OCI-LY7 (cell line): ENCODE measurements at regions of chr11 and their contacts with region 1.

Region 1: GRCh38 chr11:27506200-27507182 is at the start of gene LIN7C:
- DNase-seq: peak; percentile 97
- H3K4me3 ChIP-seq: peak within 1 kb of the TSS; percentile 97
- H3K27ac ChIP-seq: peak within 1 kb of the TSS; percentile 78
- H3K4me1 ChIP-seq: peaks cover 21% of the 10 kb centered on the region
- CTCF ChIP-seq: peak; percentile 39
- total RNA-seq, gene LIN7C: 19.7 and 22.7 TPM in 2 replicates

Region 2: GRCh38 chr11:26134481-26135355 is 1371.8 kb before region 1 on chr11:
- CTCF ChIA-PET with region 1: no interaction called
- POLR2A ChIA-PET with region 1: no interaction called
- intact Hi-C with region 1: loop called (anchors 10 kb)
- DNase-seq: peak; percentile 72
- H3K4me3 ChIP-seq: no peak overlapping the region
- H3K27ac ChIP-seq: peak overlapping the region; percentile 10
- H3K4me1 ChIP-seq: peaks cover 19% of the 10 kb centered on the region
- CTCF ChIP-seq: peak; percentile 87

Region 3: GRCh38 chr11:27362749-27363575 is 143.5 kb before region 1 on chr11 and contains the start of gene CCDC34:
- CTCF ChIA-PET with region 1: no interaction called
- POLR2A ChIA-PET with region 1: no interaction called
- intact Hi-C with region 1: loop called (anchors 2 kb)
- DNase-seq: peak; percentile 97
- H3K4me3 ChIP-seq: peak within 1 kb of the TSS; percentile 80
- H3K27ac ChIP-seq: peak within 1 kb of the TSS; percentile 50
- H3K4me1 ChIP-seq: peaks cover 21% of the 10 kb centered on the region
- CTCF ChIP-seq: no peak
- total RNA-seq, gene CCDC34: 20.8 and 21.9 TPM in 2 replicates

Region 4: DNA sequence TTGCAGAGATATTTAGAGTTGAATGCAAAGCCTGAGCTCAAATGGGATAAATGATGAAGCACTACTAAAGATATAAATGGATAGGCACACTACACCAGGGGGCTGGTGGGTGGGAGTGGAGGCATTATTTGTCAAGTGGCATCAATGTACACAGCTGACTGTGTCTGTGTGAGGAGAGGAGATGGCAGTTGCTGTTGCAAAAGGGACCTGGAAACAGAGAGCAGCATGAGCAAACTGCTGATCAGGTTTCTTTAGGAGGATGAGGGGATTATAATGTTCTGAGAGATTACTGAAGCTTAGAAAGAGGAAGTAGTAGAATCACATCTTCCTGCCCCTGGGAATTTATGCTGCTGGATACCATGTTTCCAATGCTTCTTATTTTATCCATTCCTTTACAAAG is 39.5 kb after region 1 on chr11:
- CTCF ChIA-PET with region 1: no interaction called
- POLR2A ChIA-PET with region 1: no interaction called
- intact Hi-C with region 1: no loop called
- DNase-seq: peak; percentile 7
- H3K4me3 ChIP-seq: no peak overlapping the region
- H3K27ac ChIP-seq: no peak overlapping the region
- H3K4me1 ChIP-seq: peaks cover 5% of the 10 kb centered on the region
- CTCF ChIP-seq: no peak

Region 5: DNA sequence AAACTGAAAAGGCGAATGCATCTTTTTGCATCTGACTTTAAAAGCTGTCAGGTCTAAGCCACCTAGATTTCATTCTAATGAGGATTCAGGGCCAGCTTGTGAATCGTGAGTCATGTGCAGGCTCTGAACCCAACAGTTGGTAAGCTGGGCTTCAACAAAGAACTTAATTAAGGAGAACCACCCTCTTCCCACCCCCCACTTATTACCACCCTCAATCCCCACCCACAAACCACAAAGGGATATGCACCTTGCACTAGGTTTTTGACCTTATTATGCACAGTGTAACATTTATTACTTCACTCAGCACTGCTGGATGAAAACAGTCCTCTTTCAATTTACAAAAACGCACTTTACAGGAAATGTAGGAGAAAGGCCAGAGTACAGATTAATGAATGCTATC is 94.2 kb after region 1 on chr11:
- CTCF ChIA-PET with region 1: no interaction called
- POLR2A ChIA-PET with region 1: no interaction called
- intact Hi-C with region 1: loop called (anchors 1 kb)
- DNase-seq: peak; percentile 36
- H3K4me3 ChIP-seq: peak overlapping the region; percentile 27
- H3K27ac ChIP-seq: peak overlapping the region; percentile 71
- H3K4me1 ChIP-seq: peaks cover 39% of the 10 kb centered on the region
- CTCF ChIP-seq: no peak

Region 6: DNA sequence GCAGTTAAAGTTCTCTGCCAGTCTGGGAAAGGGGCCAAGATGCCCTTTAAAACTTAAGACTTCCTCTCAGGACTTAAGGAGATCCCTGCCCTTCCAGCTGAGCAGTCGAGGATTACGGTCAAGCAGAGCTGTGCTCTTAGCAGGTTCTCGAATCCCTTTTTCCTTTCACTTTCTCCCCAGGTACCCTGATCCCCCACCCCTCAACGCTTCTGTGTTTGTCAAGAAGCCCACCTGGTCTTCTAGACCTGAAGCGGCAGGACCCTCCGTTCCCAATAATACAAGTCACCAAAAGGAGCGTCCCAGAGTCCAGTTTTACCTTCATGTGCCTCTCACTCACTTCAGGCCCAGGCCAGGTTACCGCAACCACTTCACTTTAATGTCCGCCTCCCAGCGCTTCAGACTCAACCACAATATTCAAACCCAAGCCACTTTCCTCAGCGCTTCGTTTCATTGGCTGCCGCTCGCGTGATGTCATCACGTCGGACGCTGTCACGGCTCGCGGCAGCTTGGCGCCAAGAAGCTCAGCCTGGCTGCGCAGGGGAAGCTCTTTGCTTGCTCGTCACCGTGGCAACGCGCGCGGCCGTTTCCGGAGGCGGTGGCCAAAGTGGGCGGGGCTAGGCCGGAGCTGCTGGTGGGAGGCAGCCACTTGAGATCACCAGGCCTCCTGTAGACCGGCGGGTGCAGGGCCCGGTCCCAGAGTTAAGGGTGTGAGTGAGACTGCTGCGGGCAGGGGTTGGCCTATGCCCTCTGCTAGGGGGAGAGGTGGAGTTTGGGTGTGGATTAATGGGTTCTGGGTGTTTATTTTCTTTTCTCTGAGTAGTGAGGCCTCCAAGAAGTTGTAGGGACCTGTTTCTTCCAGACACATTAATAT is 601.5 kb after region 1 on chr11 and contains the starts of genes KIF18A and METTL15:
- CTCF ChIA-PET with region 1: no interaction called
- POLR2A ChIA-PET with region 1: no interaction called
- intact Hi-C with region 1: loop called (anchors 2 kb)
- DNase-seq: peak; percentile 99
- H3K4me3 ChIP-seq: peak within 1 kb of the TSS; percentile 93
- H3K27ac ChIP-seq: peak within 1 kb of the TSS; percentile 82
- H3K4me1 ChIP-seq: peaks cover 40% of the 10 kb centered on the region
- CTCF ChIP-seq: no peak
- total RNA-seq, gene KIF18A: 36.4 and 41.5 TPM in 2 replicates
- total RNA-seq, gene METTL15: 11.7 and 18.9 TPM in 2 replicates